ENCODE measurements at regions of chr15 and their contacts with region 1.

Region 1: GRCh38 chr15:43185157-43186017 is at the start of gene CCNDBP1:
- DNase-seq: peak; percentile 97
- H3K4me3 ChIP-seq: peak within 1 kb of the TSS; percentile 76 to 86 (median 82)
- H3K27ac ChIP-seq: peak within 1 kb of the TSS; percentile 82 to 94 (median 88)
- H3K4me1 ChIP-seq: peaks cover 37 to 66% (median 46%) of the 10 kb centered on the region in 4 donors
- H3K27me3 ChIP-seq: no peaks in the 10 kb centered on the region
- CTCF ChIP-seq: peak; percentile 26 to 32 (median 30)
- EP300 ChIP-seq: no peak
- POLR2A ChIP-seq: no peak
- total RNA-seq, gene CCNDBP1: 44.9 to 87.2 (median 69.6) TPM

Region 2: GRCh38 chr15:43133430-43134156 is 51.8 kb before region 1 on chr15 and contains the start of gene TMEM62:
- intact Hi-C with region 1: loop called (anchors 10 kb)
- DNase-seq: peak; percentile 93
- H3K4me3 ChIP-seq: peak within 1 kb of the TSS; percentile 74 to 97 (median 82)
- H3K27ac ChIP-seq: peak within 1 kb of the TSS; percentile 85 to 93 (median 85)
- H3K4me1 ChIP-seq: peaks cover 10 to 26% (median 22%) of the 10 kb centered on the region in 4 donors
- H3K27me3 ChIP-seq: no peaks in the 10 kb centered on the region
- CTCF ChIP-seq: peak in 1 of 3 experiments; percentile 9
- EP300 ChIP-seq: no peak
- POLR2A ChIP-seq: peak; percentile 39
- total RNA-seq, gene TMEM62: 21.5 to 32.0 (median 25.4) TPM

Region 3: DNA sequence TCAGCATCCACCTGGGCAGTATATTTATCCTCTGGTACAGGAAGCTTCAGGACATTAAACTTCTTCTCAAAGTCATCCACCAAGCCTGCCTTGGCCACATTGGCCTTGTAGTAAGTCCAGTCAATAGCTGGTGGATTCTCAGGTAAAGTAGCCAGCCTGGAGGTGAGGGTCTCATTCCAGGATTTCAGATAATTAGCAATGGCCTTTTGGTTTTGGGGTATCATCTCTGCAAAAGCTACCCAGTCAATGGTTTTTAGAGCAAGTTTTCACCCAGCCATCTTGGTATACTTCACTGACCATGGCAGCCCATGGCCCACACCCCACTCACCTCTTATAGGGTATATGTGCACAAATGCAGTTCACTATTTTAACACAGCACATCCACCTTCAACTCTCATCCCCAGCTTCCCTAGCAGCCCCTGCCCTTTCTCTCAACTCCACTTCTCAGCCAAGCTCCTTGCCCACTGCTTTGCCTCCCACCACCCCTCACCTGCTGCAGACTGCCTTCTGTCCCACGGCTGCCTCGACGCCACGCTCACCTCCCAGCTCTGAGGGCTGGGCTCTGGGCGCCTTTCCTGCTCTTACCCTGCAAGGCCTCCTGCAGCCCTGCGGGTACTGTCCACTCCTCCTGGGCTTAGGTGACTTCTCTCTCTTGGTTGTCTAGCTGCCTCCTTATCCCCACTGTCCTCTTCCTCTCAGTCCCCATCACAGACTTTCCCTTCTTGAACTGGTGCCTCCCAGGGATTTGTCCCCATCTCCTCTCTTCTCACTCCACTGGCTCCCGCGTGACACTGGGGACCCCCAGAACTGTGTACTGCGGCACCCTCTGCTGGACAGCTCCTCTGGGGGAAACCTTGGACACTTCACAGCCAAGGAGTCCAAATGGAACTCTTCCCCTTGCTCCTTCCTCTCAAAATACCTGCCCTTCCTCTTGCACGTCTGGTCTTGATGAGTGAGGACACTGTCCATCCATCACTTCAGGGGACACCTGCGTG is 83.0 kb after region 1 on chr15:
- intact Hi-C with region 1: no loop called
- DNase-seq: no peak
- H3K4me3 ChIP-seq: no peak overlapping the region
- H3K27ac ChIP-seq: no peak overlapping the region
- H3K4me1 ChIP-seq: peaks cover 0 to 2% (median 0%) of the 10 kb centered on the region in 4 donors
- H3K27me3 ChIP-seq: peaks cover 0 to 30% (median 0%) of the 10 kb centered on the region in 4 donors
- CTCF ChIP-seq: peak in 1 of 3 experiments; percentile 14
- EP300 ChIP-seq: no peak
- POLR2A ChIP-seq: no peak